ENCODE measurements at regions of chr22 and their contacts with region 1.

Region 1: GRCh38 chr22:19178656-19179496 is at the start of gene SLC25A1:
- DNase-seq: peak; percentile 86
- ATAC-seq: peak; percentile 80
- H3K4me3 ChIP-seq: peak within 1 kb of the TSS; percentile 18 to 76 (median 66)
- H3K4me3 Mint-ChIP-seq: peak within 1 kb of the TSS; percentile 87
- H3K27ac ChIP-seq: peak within 1 kb of the TSS in 1 of 2 donors; percentile 58
- H3K27ac Mint-ChIP-seq: peak within 1 kb of the TSS; percentile 89
- H3K4me1 ChIP-seq: peaks cover 20 to 40% of the 10 kb centered on the region in 2 donors
- H3K4me1 Mint-ChIP-seq: peaks cover 35% of the 10 kb centered on the region
- H3K27me3 ChIP-seq: no peaks in the 10 kb centered on the region
- H3K27me3 Mint-ChIP-seq: no peaks in the 10 kb centered on the region
- CTCF ChIP-seq: no peak
- total RNA-seq, gene SLC25A1: 47.7 and 48.4 TPM in 2 replicates

Region 2: DNA sequence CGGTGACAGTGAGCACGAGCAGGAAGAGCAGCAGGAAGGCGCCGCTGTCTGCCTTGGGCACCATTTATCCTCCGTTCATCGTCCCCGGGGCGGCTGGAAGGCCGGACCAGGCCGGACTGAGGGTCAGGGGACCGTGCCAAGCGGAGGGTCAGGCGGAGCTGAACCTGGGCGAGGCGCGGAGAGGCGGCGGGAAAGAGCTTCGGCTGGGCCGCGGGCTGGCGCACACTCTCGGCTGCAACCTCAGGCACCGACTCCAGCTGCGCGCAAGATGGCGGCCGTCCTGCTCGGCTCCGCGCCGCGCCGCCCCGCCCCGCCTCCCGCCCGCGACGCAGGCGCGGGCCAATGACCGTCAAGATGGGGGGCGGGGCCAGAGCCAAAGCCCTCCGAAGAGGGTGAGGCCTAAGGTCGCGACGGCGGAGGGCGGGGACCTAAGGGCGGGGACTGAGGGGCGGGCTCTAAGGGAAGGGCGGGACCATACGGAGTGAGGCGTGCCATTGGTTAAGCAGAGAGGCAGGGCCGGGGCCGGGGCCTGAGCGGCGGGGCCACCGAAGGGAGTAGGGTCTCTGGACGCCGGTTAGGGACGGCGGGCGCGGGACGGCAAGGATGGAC is 56.6 kb before region 1 on chr22 and contains the start of gene DGCR2:
- CTCF ChIA-PET with region 1: interaction called, 5 read pairs
- POLR2A ChIA-PET with region 1: no interaction called
- intact Hi-C with region 1: loop called (anchors 1 kb)
- DNase-seq: peak; percentile 97
- ATAC-seq: peak; percentile 97
- H3K4me3 ChIP-seq: peak within 1 kb of the TSS; percentile 67 to 93 (median 83)
- H3K4me3 Mint-ChIP-seq: peak within 1 kb of the TSS; percentile 94
- H3K27ac ChIP-seq: peak within 1 kb of the TSS; percentile 63 to 76
- H3K27ac Mint-ChIP-seq: peak within 1 kb of the TSS; percentile 88
- H3K4me1 ChIP-seq: peaks cover 46 to 49% of the 10 kb centered on the region in 2 donors
- H3K4me1 Mint-ChIP-seq: peaks cover 45% of the 10 kb centered on the region
- H3K27me3 ChIP-seq: no peaks in the 10 kb centered on the region
- H3K27me3 Mint-ChIP-seq: no peaks in the 10 kb centered on the region
- CTCF ChIP-seq: no peak
- total RNA-seq, gene DGCR2: 49.5 and 50.4 TPM in 2 replicates

Region 3: GRCh38 chr22:19291580-19292457 is 112.9 kb after region 1 on chr22 and contains the start of gene CLTCL1:
- CTCF ChIA-PET with region 1: interaction called, 3 read pairs
- POLR2A ChIA-PET with region 1: no interaction called
- intact Hi-C with region 1: loop called (anchors 2 kb)
- DNase-seq: peak; percentile 87
- ATAC-seq: peak; percentile 83
- H3K4me3 ChIP-seq: peak within 1 kb of the TSS; percentile 64 to 88 (median 84)
- H3K4me3 Mint-ChIP-seq: peak within 1 kb of the TSS; percentile 97
- H3K27ac ChIP-seq: peak within 1 kb of the TSS; percentile 75 to 77
- H3K27ac Mint-ChIP-seq: peak within 1 kb of the TSS; percentile 94
- H3K4me1 ChIP-seq: peaks cover 15 to 17% of the 10 kb centered on the region in 2 donors
- H3K4me1 Mint-ChIP-seq: peaks cover 24% of the 10 kb centered on the region
- H3K27me3 ChIP-seq: peaks cover 0 to 13% (median 3%) of the 10 kb centered on the region in 4 experiments
- H3K27me3 Mint-ChIP-seq: peaks cover 18% of the 10 kb centered on the region
- CTCF ChIP-seq: no peak
- total RNA-seq, gene CLTCL1: 5.2 and 5.5 TPM in 2 replicates

Region 4: DNA sequence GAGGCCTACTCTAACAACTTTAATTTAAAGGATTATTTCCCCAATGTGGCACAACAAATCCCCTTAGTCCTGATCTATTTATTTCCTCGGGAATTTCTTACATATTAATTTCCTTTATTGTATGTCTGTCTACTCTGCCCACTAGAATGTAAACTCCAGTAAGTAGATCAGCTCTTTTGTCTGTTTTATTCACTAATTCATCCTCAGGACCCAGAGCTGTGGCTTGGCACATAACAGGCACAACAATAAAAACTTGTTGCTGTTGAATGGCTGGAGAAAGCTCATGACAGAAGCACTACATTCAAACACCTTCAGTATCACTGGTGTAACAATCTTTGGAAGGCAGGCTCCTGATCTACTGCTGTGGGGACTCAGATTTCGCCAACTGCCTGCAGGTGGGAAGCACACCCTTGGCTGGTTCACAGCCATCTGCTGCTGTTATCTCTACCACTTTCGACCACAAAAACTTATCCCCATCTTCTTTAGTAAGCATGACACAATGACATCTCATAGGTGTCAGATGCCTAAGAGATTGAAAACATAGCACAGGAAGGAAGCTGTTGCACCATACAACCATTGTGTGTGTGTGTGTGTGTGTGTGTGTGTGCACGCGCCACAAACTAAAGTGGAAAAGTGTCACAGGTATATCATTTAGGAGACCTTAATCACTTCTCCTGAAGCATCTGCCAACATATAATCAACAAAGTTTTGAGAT is 240.7 kb after region 1 on chr22:
- CTCF ChIA-PET with region 1: no interaction called
- POLR2A ChIA-PET with region 1: no interaction called
- intact Hi-C with region 1: no loop called
- DNase-seq: peak; percentile 28
- ATAC-seq: no peak
- H3K4me3 ChIP-seq: no peak overlapping the region
- H3K4me3 Mint-ChIP-seq: no peak overlapping the region
- H3K27ac ChIP-seq: peak overlapping the region; percentile 20 to 55
- H3K27ac Mint-ChIP-seq: peak overlapping the region; percentile 51
- H3K4me1 ChIP-seq: peaks cover 7 to 19% of the 10 kb centered on the region in 2 donors
- H3K4me1 Mint-ChIP-seq: peaks cover 43% of the 10 kb centered on the region
- H3K27me3 ChIP-seq: no peaks in the 10 kb centered on the region
- H3K27me3 Mint-ChIP-seq: no peaks in the 10 kb centered on the region
- CTCF ChIP-seq: no peak

Region 5: DNA sequence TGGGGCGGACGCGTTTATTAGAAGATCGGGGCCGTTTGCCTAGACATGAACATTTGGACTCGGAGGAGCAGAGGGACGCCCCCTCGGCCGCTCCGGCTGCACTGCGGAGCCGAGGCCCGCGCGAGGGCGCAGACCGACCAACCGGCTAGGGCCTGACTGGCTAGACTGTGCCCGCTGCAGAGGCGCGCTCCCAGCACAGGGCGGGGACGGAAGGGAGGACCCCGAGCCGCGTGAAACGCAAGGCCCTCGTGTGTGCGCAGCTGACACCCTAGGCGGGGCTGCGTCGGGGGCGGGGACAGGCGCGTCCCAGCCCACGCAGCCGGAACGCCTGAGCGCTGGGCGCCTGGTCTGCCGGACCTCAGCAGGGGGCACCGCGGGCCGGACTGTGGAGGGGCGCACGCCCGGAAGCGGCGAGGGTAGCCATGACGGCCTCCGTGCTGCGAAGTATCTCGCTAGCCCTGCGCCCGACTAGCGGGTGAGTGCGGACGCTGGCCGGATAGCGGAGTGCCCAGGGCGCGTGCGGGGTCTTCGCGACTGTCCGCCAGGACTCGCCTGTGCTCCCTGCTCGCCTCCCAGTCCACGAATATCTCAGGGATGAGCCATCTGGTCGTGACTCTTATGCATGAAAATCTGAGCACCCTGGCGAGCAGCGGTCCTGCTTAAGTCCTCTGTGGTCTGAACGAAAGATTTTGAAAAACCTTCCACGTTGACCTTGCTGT is 253.4 kb after region 1 on chr22 and contains the start of gene MRPL40:
- CTCF ChIA-PET with region 1: interaction called, 3 read pairs
- POLR2A ChIA-PET with region 1: interaction called, 11 read pairs
- intact Hi-C with region 1: loop called (anchors 2 kb)
- DNase-seq: peak; percentile 90
- ATAC-seq: peak; percentile 87
- H3K4me3 ChIP-seq: peak within 1 kb of the TSS; percentile 73 to 90 (median 85)
- H3K4me3 Mint-ChIP-seq: peak within 1 kb of the TSS; percentile 93
- H3K27ac ChIP-seq: peak within 1 kb of the TSS; percentile 91 to 97
- H3K27ac Mint-ChIP-seq: peak within 1 kb of the TSS; percentile 98
- H3K4me1 ChIP-seq: peaks cover 46 to 63% of the 10 kb centered on the region in 2 donors
- H3K4me1 Mint-ChIP-seq: peaks cover 62% of the 10 kb centered on the region
- H3K27me3 ChIP-seq: no peaks in the 10 kb centered on the region
- H3K27me3 Mint-ChIP-seq: no peaks in the 10 kb centered on the region
- CTCF ChIP-seq: no peak
- total RNA-seq, gene MRPL40: 18.0 and 21.9 TPM in 2 replicates

Region 6: DNA sequence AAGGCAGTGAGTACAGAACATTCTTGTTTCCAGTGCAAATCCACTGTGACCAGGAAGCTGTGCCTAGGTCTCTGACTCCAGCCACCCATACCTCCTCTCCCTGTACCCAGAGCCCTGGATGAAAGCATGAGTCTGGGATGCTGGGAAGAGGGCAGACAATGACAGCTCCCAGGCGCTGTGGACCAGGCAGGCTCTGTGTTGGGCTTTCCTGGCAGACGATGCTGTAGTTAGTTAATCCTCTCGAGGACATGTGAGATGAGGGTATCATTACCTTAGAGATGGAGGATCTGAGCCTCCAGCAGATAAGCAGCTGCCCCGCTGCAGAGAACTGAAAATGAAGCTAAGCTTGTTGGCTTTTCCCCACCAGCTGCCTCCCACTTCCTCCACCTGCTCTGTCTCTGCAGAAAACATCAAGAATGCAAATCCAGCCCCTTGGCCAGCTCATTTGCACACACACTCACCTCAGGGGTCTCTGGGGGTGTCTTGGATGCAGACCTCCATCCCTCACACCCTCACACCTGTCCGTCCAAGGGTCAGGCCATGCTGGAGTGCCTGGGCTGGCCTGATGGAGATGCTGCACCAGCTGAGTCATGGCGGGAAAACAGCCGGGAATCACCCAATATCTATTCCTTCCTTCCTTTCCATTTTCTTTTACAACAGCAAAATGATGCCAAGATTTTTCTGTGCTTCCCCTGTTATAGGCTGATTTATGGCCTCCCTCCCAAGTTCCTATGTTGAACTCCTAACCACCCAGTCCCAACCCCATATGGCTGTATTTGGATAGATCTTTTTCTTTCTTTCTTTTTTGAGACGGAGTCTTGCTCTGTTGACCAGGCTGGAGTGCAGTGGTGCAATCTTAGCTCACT is 440.5 kb after region 1 on chr22:
- CTCF ChIA-PET with region 1: interaction called, 3 read pairs
- POLR2A ChIA-PET with region 1: no interaction called
- intact Hi-C with region 1: loop called (anchors 2 kb)
- DNase-seq: peak; percentile 59
- ATAC-seq: peak; percentile 31
- H3K4me3 ChIP-seq: peak overlapping the region in 1 of 5 experiments; percentile 23
- H3K4me3 Mint-ChIP-seq: peak overlapping the region; percentile 57
- H3K27ac ChIP-seq: no peak overlapping the region
- H3K27ac Mint-ChIP-seq: peak overlapping the region; percentile 28
- H3K4me1 ChIP-seq: peaks cover 35 to 59% of the 10 kb centered on the region in 2 donors
- H3K4me1 Mint-ChIP-seq: peaks cover 52% of the 10 kb centered on the region
- H3K27me3 ChIP-seq: peaks cover 0 to 22% (median 5%) of the 10 kb centered on the region in 4 experiments
- H3K27me3 Mint-ChIP-seq: peaks cover 30% of the 10 kb centered on the region
- CTCF ChIP-seq: no peak

Region 7: GRCh38 chr22:19629720-19630419 is 451.0 kb after region 1 on chr22:
- CTCF ChIA-PET with region 1: interaction called, 27 read pairs
- POLR2A ChIA-PET with region 1: no interaction called
- intact Hi-C with region 1: loop called (anchors 1 kb)
- DNase-seq: peak; percentile 86
- ATAC-seq: peak; percentile 95
- H3K4me3 ChIP-seq: no peak overlapping the region
- H3K4me3 Mint-ChIP-seq: no peak overlapping the region
- H3K27ac ChIP-seq: no peak overlapping the region
- H3K27ac Mint-ChIP-seq: no peak overlapping the region
- H3K4me1 ChIP-seq: no peaks in the 10 kb centered on the region
- H3K4me1 Mint-ChIP-seq: no peaks in the 10 kb centered on the region
- H3K27me3 ChIP-seq: peaks cover 0 to 24% (median 4%) of the 10 kb centered on the region in 4 experiments
- H3K27me3 Mint-ChIP-seq: peaks cover 40% of the 10 kb centered on the region
- CTCF ChIP-seq: peak; percentile 96

Region 8: GRCh38 chr22:20298803-20299735 is 1120.2 kb after region 1 on chr22:
- CTCF ChIA-PET with region 1: no interaction called
- POLR2A ChIA-PET with region 1: no interaction called
- intact Hi-C with region 1: loop called (anchors 2 kb)
- DNase-seq: peak; percentile 89
- ATAC-seq: peak; percentile 90
- H3K4me3 ChIP-seq: peak overlapping the region in 4 of 5 experiments; percentile 28 to 75 (median 58)
- H3K4me3 Mint-ChIP-seq: peak overlapping the region; percentile 90
- H3K27ac ChIP-seq: no peak overlapping the region
- H3K27ac Mint-ChIP-seq: peak overlapping the region; percentile 70
- H3K4me1 ChIP-seq: peaks cover 4 to 10% of the 10 kb centered on the region in 2 donors
- H3K4me1 Mint-ChIP-seq: peaks cover 8% of the 10 kb centered on the region
- H3K27me3 ChIP-seq: peaks cover 0 to 7% (median 0%) of the 10 kb centered on the region in 4 experiments
- H3K27me3 Mint-ChIP-seq: peaks cover 8% of the 10 kb centered on the region
- CTCF ChIP-seq: no peak

Measured in B cell (primary cell).